Colonic mucosa (tissue), 4 donors: ENCODE measurements at regions of chr7 and their contacts with region 1.

Region 1: DNA sequence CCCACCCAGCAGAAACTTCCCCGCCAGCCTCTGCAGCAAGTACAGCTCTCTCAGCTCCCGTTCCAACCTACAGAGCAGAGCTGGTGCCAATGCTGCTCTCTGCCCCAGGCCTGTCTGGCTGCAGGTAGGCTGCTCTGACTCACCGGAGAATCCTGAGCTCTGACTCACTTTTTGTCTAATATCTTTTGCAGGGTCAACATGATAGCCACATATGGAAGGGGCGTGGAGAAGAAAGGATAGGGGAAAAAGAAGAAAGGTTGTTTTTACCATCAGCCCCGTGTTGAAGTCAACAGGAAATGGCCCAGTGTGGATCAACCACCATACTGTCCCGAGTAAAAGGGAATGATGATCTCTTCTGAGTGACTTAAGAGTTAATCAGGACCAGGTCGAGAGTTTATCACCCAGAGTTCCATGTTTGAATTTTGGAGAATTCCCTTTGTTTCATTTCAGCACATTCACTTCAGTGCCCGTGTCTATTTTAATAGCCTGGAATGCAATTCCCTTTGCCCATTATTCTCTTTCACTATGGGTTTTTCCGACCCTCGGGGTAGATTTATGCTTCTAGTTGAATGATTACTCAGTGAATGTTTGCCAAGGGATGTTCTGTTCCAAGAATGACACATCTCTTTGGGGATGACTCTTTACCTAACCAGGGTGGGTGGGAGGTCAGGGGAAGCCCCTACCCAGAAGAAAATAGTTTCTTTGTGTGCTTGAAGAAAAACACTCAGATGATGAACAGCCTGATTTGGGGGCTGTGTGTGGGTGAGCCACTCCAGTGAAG is 595.0 kb downstream of the INHBA start:
- DNase-seq: no peak
- H3K4me3 ChIP-seq: no peak overlapping the region
- H3K27ac ChIP-seq: no peak overlapping the region
- H3K4me1 ChIP-seq: no peaks in the 10 kb centered on the region
- H3K27me3 ChIP-seq: no peaks in the 10 kb centered on the region
- CTCF ChIP-seq: no peak

Region 2: GRCh38 chr7:41045556-41046123 is 62.2 kb before region 1 on chr7:
- intact Hi-C with region 1: loop called (anchors 10 kb)
- DNase-seq: peak; percentile 46
- H3K4me3 ChIP-seq: no peak overlapping the region
- H3K27ac ChIP-seq: no peak overlapping the region
- H3K4me1 ChIP-seq: no peaks in the 10 kb centered on the region
- H3K27me3 ChIP-seq: no peaks in the 10 kb centered on the region
- CTCF ChIP-seq: no peak

Region 3: GRCh38 chr7:41834805-41835694 is 727.2 kb after region 1 on chr7:
- intact Hi-C with region 1: no loop called
- DNase-seq: no peak
- H3K4me3 ChIP-seq: no peak overlapping the region
- H3K27ac ChIP-seq: no peak overlapping the region
- H3K4me1 ChIP-seq: no peaks in the 10 kb centered on the region
- H3K27me3 ChIP-seq: no peaks in the 10 kb centered on the region
- CTCF ChIP-seq: no peak